PC-3 (cell line): ENCODE measurements at regions of chr15 and their contacts with region 1.

Region 1: GRCh38 chr15:82999905-83000671 is 11.4 kb downstream of the C15orf40 start:
- DNase-seq: peak; percentile 75
- ATAC-seq: peak; percentile 81
- H3K4me3 ChIP-seq: peak overlapping the region; percentile 56
- H3K27ac ChIP-seq: no peak overlapping the region
- H3K4me1 ChIP-seq: no peaks in the 10 kb centered on the region
- H3K27me3 ChIP-seq: no peaks in the 10 kb centered on the region
- CTCF ChIP-seq: peak; percentile 79

Region 2: DNA sequence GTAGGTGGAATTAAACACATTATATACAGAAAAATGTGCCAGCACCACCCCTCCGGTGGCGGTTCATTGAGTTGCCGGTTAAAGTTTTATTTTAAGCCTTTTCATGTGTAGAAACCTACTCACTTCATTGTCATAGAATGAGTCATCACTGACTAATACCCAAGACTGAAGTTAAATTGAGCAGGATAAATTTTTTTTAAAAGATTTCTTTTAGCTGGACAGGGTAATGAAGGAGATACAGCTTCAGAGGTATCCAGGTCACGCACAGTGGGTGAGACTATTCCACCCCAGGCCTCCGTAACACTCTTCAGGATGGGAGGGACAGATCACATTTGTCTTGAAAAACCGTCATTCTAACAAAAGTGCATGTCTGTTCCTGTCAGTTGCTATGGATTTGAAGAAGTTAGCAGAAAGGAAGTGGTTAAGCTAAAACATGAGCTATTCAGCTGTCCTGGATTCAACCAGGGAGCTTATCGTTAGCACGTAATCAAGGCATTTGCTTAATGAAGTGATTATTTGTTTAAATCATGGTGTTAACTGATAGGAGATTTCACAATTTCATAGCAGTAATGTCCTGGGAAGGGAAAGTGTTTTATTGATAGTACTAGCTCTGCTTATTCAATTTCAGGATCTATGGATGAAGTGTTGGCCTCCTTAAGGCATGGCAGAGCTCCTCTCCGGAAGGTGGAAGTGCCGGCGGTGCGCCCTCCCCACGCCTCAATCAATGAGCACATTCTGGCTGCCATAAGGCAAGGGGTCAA is 167.3 kb before region 1 on chr15:
- CTCF ChIA-PET with region 1: no interaction called
- POLR2A ChIA-PET with region 1: no interaction called
- intact Hi-C with region 1: loop called (anchors 1 kb)
- DNase-seq: peak; percentile 93
- ATAC-seq: peak; percentile 91
- H3K4me3 ChIP-seq: peak overlapping the region; percentile 41; the same call in 1 of the 2 replicates
- H3K27ac ChIP-seq: peak overlapping the region; percentile 87
- H3K4me1 ChIP-seq: peaks cover 22% of the 10 kb centered on the region
- H3K27me3 ChIP-seq: no peaks in the 10 kb centered on the region
- CTCF ChIP-seq: no peak; the same call in 1 of the 2 replicates

Region 3: GRCh38 chr15:82849556-82850512 is 150.3 kb before region 1 on chr15:
- CTCF ChIA-PET with region 1: no interaction called
- POLR2A ChIA-PET with region 1: no interaction called
- intact Hi-C with region 1: loop called (anchors 1 kb)
- DNase-seq: peak; percentile 86
- ATAC-seq: peak; percentile 83
- H3K4me3 ChIP-seq: no peak overlapping the region
- H3K27ac ChIP-seq: no peak overlapping the region
- H3K4me1 ChIP-seq: peaks cover 6% of the 10 kb centered on the region; the same call in 1 of the 2 replicates
- H3K27me3 ChIP-seq: no peaks in the 10 kb centered on the region
- CTCF ChIP-seq: peak; percentile 90